Spleen (tissue), 13 donors: ENCODE measurements at regions of chr1 and their contacts with region 1.

Region 1: GRCh38 chr1:6185635-6186382 is 5.7 kb upstream of the CHD5 start:
- DNase-seq: no peak
- H3K4me3 ChIP-seq: no peak overlapping the region
- H3K27ac ChIP-seq: no peak overlapping the region
- H3K4me1 ChIP-seq: peaks cover 5 to 51% (median 13%) of the 10 kb centered on the region in 6 donors
- H3K27me3 ChIP-seq: peaks cover under 1 to 15% (median 7%) of the 10 kb centered on the region in 7 donors
- CTCF ChIP-seq: peak in 6 of 11 experiments; percentile 13 to 33 (median 22)
- POLR2A ChIP-seq: no peak

Region 2: GRCh38 chr1:6141592-6141991 is 44.2 kb before region 1 on chr1:
- intact Hi-C with region 1: no loop called
- DNase-seq: no peak
- H3K4me3 ChIP-seq: no peak overlapping the region
- H3K27ac ChIP-seq: no peak overlapping the region
- H3K4me1 ChIP-seq: no peaks in the 10 kb centered on the region
- H3K27me3 ChIP-seq: peaks cover 0 to 25% (median 2%) of the 10 kb centered on the region in 7 donors
- CTCF ChIP-seq: peak in 1 of 11 experiments; percentile 16
- POLR2A ChIP-seq: no peak

Region 3: DNA sequence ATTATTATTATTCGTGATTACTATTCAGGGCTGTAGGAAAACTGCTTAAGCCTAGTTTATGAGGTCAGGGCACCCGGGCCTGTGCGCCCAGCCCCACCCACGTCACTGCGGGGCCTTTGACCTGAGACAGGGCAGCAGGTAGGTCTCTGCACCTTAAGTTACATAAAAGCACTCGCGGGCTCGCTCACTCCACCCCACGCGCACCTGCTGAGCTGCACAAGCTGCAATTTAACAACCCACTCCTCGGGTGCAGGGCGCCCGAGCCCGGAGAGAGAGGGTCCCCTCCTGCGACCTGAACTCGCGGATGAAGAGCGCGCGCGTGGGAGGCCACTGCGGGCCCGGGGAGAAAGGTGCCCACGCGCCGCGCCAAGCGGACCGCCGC is 49.5 kb after region 1 on chr1:
- intact Hi-C with region 1: loop called (anchors 10 kb)
- DNase-seq: no peak
- H3K4me3 ChIP-seq: peak overlapping the region; percentile 67 to 95 (median 80)
- H3K27ac ChIP-seq: peak overlapping the region in 6 of 8 donors; percentile 48 to 83 (median 69)
- H3K4me1 ChIP-seq: peaks cover 8 to 28% (median 21%) of the 10 kb centered on the region in 6 donors
- H3K27me3 ChIP-seq: peaks cover 0 to 28% (median 19%) of the 10 kb centered on the region in 7 donors
- CTCF ChIP-seq: no peak
- POLR2A ChIP-seq: no peak